Head of caudate nucleus (tissue), 42 donors: ENCODE measurements at regions of chr19 and their contacts with region 1.

Region 1: GRCh38 chr19:29714953-29715700 is at the start of gene C19orf12:
- DNase-seq: peak; percentile 29 to 85 (median 74)

Region 2: DNA sequence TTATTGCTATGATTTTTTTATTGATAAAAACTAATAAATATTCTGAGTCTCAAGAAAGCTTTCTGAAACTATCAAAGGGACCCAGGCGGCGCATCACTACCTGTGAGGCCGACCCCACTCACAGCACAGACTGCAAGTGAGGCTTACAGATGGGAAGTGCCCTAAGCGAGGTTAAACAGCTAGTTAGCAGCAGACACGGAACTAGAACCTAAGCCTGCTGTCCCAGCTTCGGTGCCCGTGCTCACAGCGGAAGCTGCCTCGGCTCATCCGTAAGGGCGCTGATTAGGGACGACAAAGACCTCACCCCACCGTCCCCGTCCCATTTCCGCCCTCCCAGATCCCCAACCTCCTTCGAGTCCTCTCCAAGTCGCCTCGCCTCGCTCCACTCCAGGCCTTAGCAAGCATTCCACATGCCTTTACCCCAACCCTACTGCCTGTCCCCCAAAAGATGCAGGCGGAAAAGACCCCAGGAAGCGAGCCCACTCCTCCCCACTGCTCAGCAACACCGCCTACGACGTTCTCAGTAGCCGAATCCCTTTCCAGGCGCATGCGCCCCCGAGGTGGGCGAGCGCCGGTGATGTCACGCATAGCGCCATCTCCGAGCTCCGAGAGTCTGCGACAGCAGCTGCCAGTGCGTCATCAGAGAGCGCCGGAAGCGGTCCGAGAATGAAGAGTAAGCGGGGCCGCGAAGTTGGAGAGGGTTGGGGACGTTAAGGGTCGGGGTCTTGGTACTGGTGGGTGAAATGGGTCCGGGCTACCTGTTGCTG is 109.3 kb before region 1 on chr19 and contains the start of gene POP4:
- intact Hi-C with region 1: loop called (anchors 2 kb)
- DNase-seq: peak; percentile 92 to 100 (median 98)

Region 3: DNA sequence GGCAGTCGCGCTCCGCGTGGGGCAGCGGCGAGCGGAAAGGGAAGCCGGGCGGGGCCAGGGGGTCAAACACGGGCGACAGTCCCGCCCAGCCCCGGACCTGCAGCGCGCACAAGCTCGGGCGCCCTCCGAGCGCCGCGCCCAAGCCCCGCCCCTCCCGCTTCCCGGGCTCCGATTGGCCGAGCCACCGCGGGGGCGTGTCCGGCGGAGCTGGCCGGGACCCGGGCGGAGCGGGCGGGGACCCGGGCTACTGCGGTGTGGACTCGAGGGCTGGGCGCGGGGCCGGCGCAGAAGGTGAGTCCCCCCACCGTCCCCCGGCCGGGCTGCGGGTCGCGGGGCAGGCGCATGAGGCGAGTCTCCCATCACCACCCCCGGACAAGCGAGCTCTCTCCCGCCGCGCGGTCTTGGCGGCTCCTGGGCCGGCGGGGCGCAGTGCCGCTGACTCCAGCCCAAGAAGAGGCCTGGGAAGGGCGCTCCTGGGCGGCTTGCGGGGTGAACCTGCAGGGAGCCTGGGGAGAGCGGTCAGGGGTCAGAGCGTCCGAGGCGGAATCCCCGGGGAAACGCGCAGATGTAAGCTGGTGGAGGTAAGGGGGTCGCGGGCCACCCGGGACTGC is 49.8 kb before region 1 on chr19 and contains the start of gene PLEKHF1:
- intact Hi-C with region 1: loop called (anchors 10 kb)
- DNase-seq: peak; percentile 74 to 96 (median 92)

Region 4: DNA sequence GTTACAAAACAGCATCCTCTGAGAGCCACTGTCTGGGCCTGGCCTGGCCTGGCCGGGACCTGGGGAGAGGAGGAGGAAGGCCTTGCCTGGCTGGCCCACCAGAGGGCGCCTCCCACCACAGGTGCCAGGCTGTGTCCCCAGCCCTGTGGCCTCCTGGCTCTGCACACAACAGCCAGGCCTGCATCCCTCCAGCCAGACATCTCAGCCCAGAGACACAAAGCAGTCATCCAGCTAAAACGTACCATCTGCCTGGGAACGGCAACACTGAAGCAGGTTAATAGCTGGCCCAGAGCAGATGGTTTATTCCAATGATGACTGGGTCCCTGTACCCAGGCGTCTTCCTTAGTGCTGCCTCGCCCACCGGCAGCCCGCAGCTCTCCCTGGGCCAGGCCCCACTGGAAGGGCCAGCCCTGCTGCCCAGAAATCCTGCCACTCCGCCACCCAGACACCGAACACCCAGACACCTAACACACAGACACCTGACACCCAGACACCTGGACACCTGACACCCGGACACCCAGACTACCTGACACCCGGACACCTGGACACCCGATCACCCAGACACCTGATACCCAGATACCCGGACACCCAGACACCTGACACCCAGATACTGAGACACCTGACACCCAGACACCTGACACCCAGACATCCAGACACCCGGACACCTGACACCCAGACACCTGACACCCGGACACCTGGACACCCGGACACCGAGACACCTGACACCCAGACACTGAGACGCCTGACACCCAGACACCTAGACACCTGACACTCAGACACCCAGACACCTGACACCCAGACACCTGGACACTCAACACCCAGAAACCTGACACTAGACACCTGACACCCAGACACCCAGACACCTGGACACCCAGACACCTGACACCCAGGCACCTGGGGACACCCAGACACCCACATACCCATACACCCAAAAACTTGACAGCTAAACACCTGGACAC is 20.2 kb before region 1 on chr19:
- intact Hi-C with region 1: loop called (anchors 2 kb)
- DNase-seq: peak; percentile 70 to 97 (median 92)

Region 5: GRCh38 chr19:30029721-30030510 is 314.8 kb after region 1 on chr19:
- intact Hi-C with region 1: no loop called
- DNase-seq: no peak